ENCODE measurements at regions of chr5 and their contacts with region 1.

Region 1: GRCh38 chr5:21058289-21058688 is 1070.3 kb upstream of the CDH18 start:
- DNase-seq: peak; percentile 73
- ATAC-seq: peak; percentile 93
- H3K4me3 ChIP-seq: peak overlapping the region in 4 of 5 experiments; percentile 31 to 56 (median 48)
- H3K4me3 Mint-ChIP-seq: peak overlapping the region; percentile 84
- H3K27ac ChIP-seq: peak overlapping the region; percentile 55 to 72
- H3K27ac Mint-ChIP-seq: peak overlapping the region; percentile 86
- H3K4me1 ChIP-seq: peaks cover 33 to 41% of the 10 kb centered on the region in 2 donors
- H3K4me1 Mint-ChIP-seq: peaks cover 47% of the 10 kb centered on the region
- H3K27me3 ChIP-seq: no peaks in the 10 kb centered on the region
- H3K27me3 Mint-ChIP-seq: no peaks in the 10 kb centered on the region
- CTCF ChIP-seq: no peak

Region 2: GRCh38 chr5:20972419-20972925 is 85.8 kb before region 1 on chr5:
- CTCF ChIA-PET with region 1: no interaction called
- POLR2A ChIA-PET with region 1: no interaction called
- intact Hi-C with region 1: loop called (anchors 10 kb)
- DNase-seq: peak; percentile 37
- ATAC-seq: peak; percentile 67
- H3K4me3 ChIP-seq: peak overlapping the region in 4 of 5 experiments; percentile 23 to 57 (median 46)
- H3K4me3 Mint-ChIP-seq: peak overlapping the region; percentile 85
- H3K27ac ChIP-seq: no peak overlapping the region
- H3K27ac Mint-ChIP-seq: no peak overlapping the region
- H3K4me1 ChIP-seq: no peaks in the 10 kb centered on the region
- H3K4me1 Mint-ChIP-seq: peaks cover 9% of the 10 kb centered on the region
- H3K27me3 ChIP-seq: no peaks in the 10 kb centered on the region
- H3K27me3 Mint-ChIP-seq: no peaks in the 10 kb centered on the region
- CTCF ChIP-seq: peak; percentile 14

Region 3: DNA sequence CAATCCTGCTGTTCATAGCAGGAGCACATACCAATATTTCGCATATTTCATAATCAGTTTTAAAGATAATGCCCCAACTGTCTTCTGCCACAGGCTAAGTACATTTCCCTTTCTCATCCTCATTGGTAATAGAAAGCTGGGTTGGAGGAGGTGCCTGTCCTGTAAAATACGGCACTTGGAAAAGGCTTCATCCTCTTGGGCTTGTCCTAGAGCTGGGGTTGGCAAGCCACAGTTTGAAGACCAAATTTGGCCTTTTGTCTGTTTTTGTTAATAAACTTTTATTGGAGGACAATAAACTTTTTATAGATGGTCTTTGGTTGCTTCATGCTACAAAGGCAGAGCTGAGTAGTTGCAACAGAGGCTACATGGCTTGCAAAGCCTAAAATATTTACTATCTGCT is 72.5 kb before region 1 on chr5:
- CTCF ChIA-PET with region 1: no interaction called
- POLR2A ChIA-PET with region 1: no interaction called
- intact Hi-C with region 1: no loop called
- DNase-seq: no peak
- ATAC-seq: no peak
- H3K4me3 ChIP-seq: no peak overlapping the region
- H3K4me3 Mint-ChIP-seq: no peak overlapping the region
- H3K27ac ChIP-seq: no peak overlapping the region
- H3K27ac Mint-ChIP-seq: no peak overlapping the region
- H3K4me1 ChIP-seq: no peaks in the 10 kb centered on the region
- H3K4me1 Mint-ChIP-seq: no peaks in the 10 kb centered on the region
- H3K27me3 ChIP-seq: no peaks in the 10 kb centered on the region
- H3K27me3 Mint-ChIP-seq: no peaks in the 10 kb centered on the region
- CTCF ChIP-seq: no peak

Region 4: DNA sequence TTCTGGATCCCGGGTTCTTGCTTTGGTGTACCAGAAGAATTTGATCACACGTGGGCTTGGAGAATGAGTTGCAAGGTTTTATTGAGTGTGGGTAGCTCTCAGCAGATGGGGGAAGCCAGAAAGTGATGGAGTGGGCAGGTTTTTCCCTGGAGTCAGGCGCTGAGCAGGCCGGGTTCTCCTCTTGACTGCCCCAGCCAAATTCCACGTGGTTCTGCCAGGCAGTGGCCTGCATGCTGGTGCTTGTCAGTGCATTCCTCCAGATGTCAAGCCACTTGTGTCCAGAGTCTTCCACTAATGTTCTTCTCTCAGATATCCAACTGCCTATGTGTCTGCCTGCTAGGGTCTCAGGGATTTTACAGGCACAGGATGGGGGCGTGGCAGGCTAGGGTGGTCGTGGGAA is 14.2 kb before region 1 on chr5:
- CTCF ChIA-PET with region 1: no interaction called
- POLR2A ChIA-PET with region 1: no interaction called
- intact Hi-C with region 1: loop called (anchors 1 kb)
- DNase-seq: no peak
- ATAC-seq: no peak
- H3K4me3 ChIP-seq: no peak overlapping the region
- H3K4me3 Mint-ChIP-seq: no peak overlapping the region
- H3K27ac ChIP-seq: no peak overlapping the region
- H3K27ac Mint-ChIP-seq: no peak overlapping the region
- H3K4me1 ChIP-seq: no peaks in the 10 kb centered on the region
- H3K4me1 Mint-ChIP-seq: peaks cover 1% of the 10 kb centered on the region
- H3K27me3 ChIP-seq: no peaks in the 10 kb centered on the region
- H3K27me3 Mint-ChIP-seq: no peaks in the 10 kb centered on the region
- CTCF ChIP-seq: no peak

Region 5: DNA sequence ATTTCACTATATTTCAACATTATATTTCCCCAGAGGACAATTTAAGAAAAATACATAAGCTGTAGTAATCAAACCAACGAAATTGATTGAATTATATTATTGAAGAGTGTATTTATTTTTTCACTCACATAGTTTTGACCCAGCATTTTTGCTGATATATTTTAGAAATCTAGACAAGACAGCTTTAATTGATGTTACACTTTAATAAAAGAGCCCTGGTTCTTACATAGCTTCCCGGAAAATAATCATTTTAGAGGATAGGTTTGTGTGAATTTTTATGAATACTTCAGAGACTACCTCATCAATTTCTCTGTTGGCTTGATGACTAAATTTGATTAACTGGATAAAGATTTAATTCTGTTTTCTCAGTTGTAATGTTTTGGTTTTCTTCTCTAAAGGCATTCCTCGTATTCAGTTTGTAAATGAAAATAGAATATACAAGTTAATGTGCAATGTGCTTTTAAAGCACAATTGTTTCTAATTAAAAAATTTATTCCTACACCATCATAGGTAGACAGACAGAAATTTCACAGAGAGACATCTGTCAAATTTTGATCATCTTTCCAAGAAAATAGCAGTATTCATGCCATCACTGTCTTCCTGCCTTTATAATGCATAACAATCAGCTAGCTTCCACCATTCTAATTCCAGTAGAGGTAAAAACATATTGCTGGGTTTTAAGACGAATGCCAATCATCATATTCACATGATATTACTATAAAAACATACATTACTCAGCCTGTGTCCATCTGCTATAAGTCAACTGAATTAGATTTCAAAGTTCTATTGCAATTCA is 1353.5 kb after region 1 on chr5:
- CTCF ChIA-PET with region 1: no interaction called
- POLR2A ChIA-PET with region 1: no interaction called
- intact Hi-C with region 1: no loop called
- DNase-seq: no peak
- ATAC-seq: no peak
- H3K4me3 ChIP-seq: no peak overlapping the region
- H3K4me3 Mint-ChIP-seq: no peak overlapping the region
- H3K27ac ChIP-seq: no peak overlapping the region
- H3K27ac Mint-ChIP-seq: no peak overlapping the region
- H3K4me1 ChIP-seq: no peaks in the 10 kb centered on the region
- H3K4me1 Mint-ChIP-seq: no peaks in the 10 kb centered on the region
- H3K27me3 ChIP-seq: no peaks in the 10 kb centered on the region
- H3K27me3 Mint-ChIP-seq: no peaks in the 10 kb centered on the region
- CTCF ChIP-seq: no peak